MCF 10A (cell line): ENCODE measurements at regions of chr6 and their contacts with region 1.

Region 1: DNA sequence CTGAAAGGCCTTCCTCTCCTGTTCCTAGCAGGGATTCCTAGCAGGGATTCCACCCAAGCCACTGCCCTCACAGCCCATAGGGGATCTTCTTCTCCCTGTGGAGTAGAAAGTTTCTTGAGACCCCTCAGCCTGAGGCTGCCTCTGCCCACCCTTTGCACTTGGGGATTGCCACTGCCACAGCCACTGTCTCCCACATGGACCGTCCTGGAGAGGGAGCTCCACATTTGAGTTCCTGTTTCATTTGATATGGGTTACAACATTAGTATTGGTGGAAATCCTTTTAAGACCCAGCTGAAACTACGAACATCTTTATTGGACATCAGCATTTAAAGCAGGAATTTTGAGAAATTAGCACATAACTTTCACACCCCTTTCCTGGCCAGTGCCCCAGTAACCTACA is 25.6 kb downstream of the HLA-G start:
- DNase-seq: no peak
- H3K4me3 Mint-ChIP-seq: no peak overlapping the region
- H3K27ac Mint-ChIP-seq: no peak overlapping the region
- H3K4me1 Mint-ChIP-seq: no peaks in the 10 kb centered on the region
- H3K27me3 Mint-ChIP-seq: peaks cover 8% of the 10 kb centered on the region
- CTCF ChIP-seq: no peak

Region 2: DNA sequence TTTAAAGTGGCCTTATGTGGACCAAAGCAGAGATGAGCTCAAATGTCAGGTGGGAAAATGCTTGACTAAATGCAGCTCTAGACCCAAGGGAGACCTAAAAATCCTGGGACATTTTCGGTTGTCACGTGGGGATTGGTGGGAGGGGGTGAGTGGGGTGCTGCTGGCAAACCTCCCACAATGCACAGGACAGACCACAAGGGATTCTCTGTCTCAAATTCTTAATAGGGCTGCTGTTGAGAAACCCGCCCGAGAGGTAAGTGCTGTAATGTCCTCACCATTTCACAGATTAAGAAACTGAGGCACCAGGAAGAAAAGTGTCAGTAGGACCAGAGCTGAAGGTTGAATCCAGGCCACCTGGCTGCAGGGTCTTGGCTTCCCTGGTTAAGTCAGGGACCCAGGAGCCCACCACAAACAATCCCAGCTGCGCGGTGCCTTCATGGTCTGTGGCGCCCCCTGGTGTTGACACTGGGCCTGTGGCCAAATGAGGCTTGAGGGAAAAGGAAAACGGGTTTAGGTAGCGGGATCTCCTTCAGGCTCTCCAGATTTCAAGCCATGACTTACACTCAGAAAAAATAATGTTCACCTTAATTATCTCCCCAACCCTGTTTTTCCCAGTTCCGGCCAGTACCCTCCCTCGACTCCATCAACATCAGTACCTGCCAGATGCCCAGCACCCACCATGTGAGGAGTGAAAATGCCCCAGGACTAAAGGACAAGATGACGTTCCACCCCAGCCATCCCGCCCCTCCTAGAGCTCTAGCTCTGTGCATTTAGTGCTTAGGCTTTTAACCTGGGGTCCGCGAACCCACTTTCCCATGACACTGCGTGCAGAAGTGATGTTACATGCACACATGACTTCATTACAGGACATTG is 18.4 kb before region 1 on chr6:
- CTCF ChIA-PET with region 1: no interaction called
- POLR2A ChIA-PET with region 1: no interaction called
- intact Hi-C with region 1: no loop called
- DNase-seq: peak; percentile 42
- H3K4me3 Mint-ChIP-seq: no peak overlapping the region
- H3K27ac Mint-ChIP-seq: no peak overlapping the region
- H3K4me1 Mint-ChIP-seq: peaks cover 6% of the 10 kb centered on the region
- H3K27me3 Mint-ChIP-seq: peaks cover 45% of the 10 kb centered on the region
- CTCF ChIP-seq: peak; percentile 91

Region 3: GRCh38 chr6:30013291-30013922 is 160.2 kb after region 1 on chr6:
- CTCF ChIA-PET with region 1: interaction called, 22 read pairs
- POLR2A ChIA-PET with region 1: no interaction called
- intact Hi-C with region 1: loop called (anchors 1 kb)
- DNase-seq: peak; percentile 19
- H3K4me3 Mint-ChIP-seq: no peak overlapping the region
- H3K27ac Mint-ChIP-seq: no peak overlapping the region
- H3K4me1 Mint-ChIP-seq: no peaks in the 10 kb centered on the region
- H3K27me3 Mint-ChIP-seq: no peaks in the 10 kb centered on the region
- CTCF ChIP-seq: peak; percentile 71

Region 4: GRCh38 chr6:30029588-30029987 is 176.3 kb after region 1 on chr6:
- CTCF ChIA-PET with region 1: no interaction called
- POLR2A ChIA-PET with region 1: no interaction called
- intact Hi-C with region 1: no loop called
- DNase-seq: no peak
- H3K4me3 Mint-ChIP-seq: no peak overlapping the region
- H3K27ac Mint-ChIP-seq: no peak overlapping the region
- H3K4me1 Mint-ChIP-seq: peaks cover 14% of the 10 kb centered on the region
- H3K27me3 Mint-ChIP-seq: no peaks in the 10 kb centered on the region
- CTCF ChIP-seq: no peak

Region 5: DNA sequence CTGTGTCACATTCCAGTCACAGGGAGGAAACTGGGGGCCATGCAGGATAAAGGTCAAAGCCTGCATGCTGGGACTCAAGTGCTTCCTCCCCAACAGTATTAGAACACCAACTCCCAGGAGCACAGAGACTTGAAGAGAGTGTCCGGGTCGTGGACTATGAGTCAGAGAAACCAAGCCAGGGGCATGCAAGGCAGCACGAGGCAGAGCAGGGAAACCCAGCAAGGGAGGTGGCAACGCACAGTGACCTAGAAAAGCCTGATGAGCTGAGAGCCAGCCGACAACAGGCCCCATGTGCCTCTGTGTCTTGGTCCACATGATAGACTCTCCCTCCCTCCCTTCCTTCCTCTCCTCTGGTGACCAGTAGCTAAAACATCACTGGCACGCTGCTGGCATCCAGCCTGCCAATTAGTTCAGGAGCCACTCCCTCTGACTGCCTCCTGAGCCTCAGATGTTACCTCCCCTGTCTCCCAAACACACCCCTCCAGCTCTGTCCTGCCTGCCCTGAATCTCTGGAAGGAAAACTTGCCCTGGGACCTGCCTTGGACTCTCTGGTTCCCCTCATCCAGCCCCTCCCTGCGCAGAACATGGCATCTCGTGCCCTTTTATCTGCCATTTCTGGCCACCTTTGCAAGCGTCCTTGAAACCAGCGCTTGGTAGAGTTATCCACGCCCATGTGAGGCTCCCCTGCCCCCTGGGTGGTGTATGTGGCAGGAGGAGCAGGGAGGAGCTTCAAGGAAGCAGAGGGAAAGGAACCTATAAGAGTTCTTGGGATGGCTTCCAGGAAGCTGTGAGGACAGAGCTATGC is 238.5 kb after region 1 on chr6:
- CTCF ChIA-PET with region 1: no interaction called
- POLR2A ChIA-PET with region 1: no interaction called
- intact Hi-C with region 1: no loop called
- DNase-seq: peak; percentile 79
- H3K4me3 Mint-ChIP-seq: no peak overlapping the region
- H3K27ac Mint-ChIP-seq: peak overlapping the region; percentile 67
- H3K4me1 Mint-ChIP-seq: peaks cover 25% of the 10 kb centered on the region
- H3K27me3 Mint-ChIP-seq: no peaks in the 10 kb centered on the region
- CTCF ChIP-seq: no peak

Region 6: GRCh38 chr6:30453508-30454116 is 600.4 kb after region 1 on chr6:
- CTCF ChIA-PET with region 1: no interaction called
- POLR2A ChIA-PET with region 1: no interaction called
- intact Hi-C with region 1: no loop called
- DNase-seq: peak; percentile 78
- H3K4me3 Mint-ChIP-seq: no peak overlapping the region
- H3K27ac Mint-ChIP-seq: no peak overlapping the region
- H3K4me1 Mint-ChIP-seq: no peaks in the 10 kb centered on the region
- H3K27me3 Mint-ChIP-seq: peaks cover 75% of the 10 kb centered on the region
- CTCF ChIP-seq: peak; percentile 57